Right ventricle myocardium superior (tissue), 1 donor: ENCODE measurements at regions of chr14 and their contacts with region 1.

Region 1: DNA sequence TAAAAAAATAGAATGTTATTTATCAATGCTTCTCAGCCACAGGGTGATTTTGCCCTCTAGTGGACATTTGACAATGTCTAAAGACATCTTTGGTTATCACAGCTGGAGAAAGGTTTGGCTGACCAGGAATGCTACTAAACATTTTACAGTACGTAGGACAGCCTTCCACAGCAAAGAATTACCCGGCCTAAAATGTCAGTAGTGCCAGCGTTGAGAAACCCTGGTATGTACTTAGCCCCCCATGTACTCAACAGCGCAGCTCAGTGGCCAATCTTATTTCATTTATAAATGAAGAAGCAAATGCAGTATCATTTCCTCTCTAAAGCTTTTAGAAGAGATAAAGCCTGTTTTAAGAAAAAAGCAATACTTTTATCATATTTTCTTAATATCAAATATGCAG is 5.8 kb downstream of the MARK3 start:
- DNase-seq: no peak
- ATAC-seq: peak; percentile 9

Region 2: GRCh38 chr14:103444837-103445524 is 53.9 kb after region 1 on chr14:
- intact Hi-C with region 1: loop called (anchors 10 kb)
- DNase-seq: no peak
- ATAC-seq: peak; percentile 34

Region 3: GRCh38 chr14:103456167-103456835 is 65.3 kb after region 1 on chr14:
- intact Hi-C with region 1: no loop called
- DNase-seq: no peak
- ATAC-seq: no peak